Activated CD8-positive, alpha-beta T cell treated with anti-CD3 and anti-CD28 coated beads for 36 hours (primary cell): ENCODE measurements at regions of chr12 and their contacts with region 1.

Region 1: DNA sequence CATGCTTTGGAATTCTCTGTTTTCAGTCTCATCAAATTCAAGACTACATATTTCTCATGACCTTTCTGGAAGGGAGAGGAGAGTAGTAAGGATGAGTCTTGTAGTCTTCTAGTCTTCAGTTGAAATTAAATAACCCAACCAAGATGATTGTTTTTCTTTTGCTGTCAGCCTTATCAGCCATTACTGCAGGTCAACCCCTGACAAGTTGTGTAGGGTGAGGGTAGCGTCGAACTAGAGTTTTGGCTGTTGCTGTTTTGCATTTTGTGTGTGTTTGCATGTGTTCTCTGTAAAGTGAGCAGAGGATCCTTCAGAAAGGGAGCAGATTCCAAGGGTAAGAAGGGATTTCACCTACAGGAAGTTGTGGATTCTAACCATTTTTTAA is 28.4 kb downstream of the DIP2B start:
- DNase-seq: no peak
- ATAC-seq: peak; percentile 21
- H3K4me3 Mint-ChIP-seq: no peak overlapping the region
- H3K27ac Mint-ChIP-seq: no peak overlapping the region
- H3K4me1 Mint-ChIP-seq: peaks cover 38% of the 10 kb centered on the region
- H3K27me3 Mint-ChIP-seq: no peaks in the 10 kb centered on the region
- CTCF ChIP-seq: no peak

Region 2: DNA sequence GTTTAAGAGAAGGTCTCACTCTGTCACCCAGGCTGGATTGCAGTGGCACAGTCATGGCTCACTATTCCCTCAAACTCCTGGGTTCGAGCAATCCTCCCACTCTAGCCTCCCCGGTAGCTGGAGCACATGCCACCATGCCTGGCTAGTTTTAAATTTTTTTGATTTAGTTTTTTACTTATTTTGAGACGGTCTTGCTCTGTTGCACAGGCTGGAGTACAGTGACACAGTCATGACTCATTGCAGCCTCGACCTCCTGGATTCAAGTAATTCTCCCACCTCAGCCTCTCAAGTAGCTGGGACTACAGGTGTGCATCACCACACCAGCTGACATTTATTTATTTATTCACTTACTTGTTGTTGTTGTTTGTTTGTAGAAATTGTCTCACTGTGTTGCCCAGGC is 50.6 kb before region 1 on chr12:
- CTCF ChIA-PET with region 1: no interaction called
- POLR2A ChIA-PET with region 1: no interaction called
- intact Hi-C with region 1: no loop called
- DNase-seq: no peak
- ATAC-seq: no peak
- H3K4me3 Mint-ChIP-seq: no peak overlapping the region
- H3K27ac Mint-ChIP-seq: no peak overlapping the region
- H3K4me1 Mint-ChIP-seq: no peaks in the 10 kb centered on the region
- H3K27me3 Mint-ChIP-seq: no peaks in the 10 kb centered on the region
- CTCF ChIP-seq: no peak

Region 3: GRCh38 chr12:50517456-50518048 is 15.6 kb before region 1 on chr12:
- CTCF ChIA-PET with region 1: interaction called, 4 read pairs
- POLR2A ChIA-PET with region 1: interaction called, 36 read pairs
- intact Hi-C with region 1: no loop called
- DNase-seq: no peak
- ATAC-seq: peak; percentile 90
- H3K4me3 Mint-ChIP-seq: no peak overlapping the region
- H3K27ac Mint-ChIP-seq: no peak overlapping the region
- H3K4me1 Mint-ChIP-seq: peaks cover 48% of the 10 kb centered on the region
- H3K27me3 Mint-ChIP-seq: no peaks in the 10 kb centered on the region
- CTCF ChIP-seq: no peak

Region 4: DNA sequence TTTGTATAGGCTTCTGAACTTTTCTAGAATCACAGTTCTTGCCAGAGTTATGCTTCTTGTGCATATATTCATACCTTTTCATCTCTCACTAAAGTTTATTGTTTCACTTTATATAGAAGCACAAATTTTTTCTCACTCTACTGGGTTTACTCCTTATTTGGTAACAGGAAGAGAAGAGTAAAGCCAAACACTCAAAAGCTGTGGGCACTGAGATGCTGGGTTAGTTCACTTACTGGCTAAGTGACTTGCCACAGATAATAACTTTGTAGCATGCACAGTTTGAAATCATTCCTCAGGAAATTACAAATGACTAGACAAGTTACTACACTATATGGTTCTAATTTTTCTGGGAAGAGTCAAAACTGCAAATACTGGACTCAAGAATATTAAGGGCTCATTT is 426.9 kb after region 1 on chr12:
- CTCF ChIA-PET with region 1: no interaction called
- POLR2A ChIA-PET with region 1: no interaction called
- intact Hi-C with region 1: no loop called
- DNase-seq: no peak
- ATAC-seq: no peak
- H3K4me3 Mint-ChIP-seq: no peak overlapping the region
- H3K27ac Mint-ChIP-seq: no peak overlapping the region
- H3K4me1 Mint-ChIP-seq: peaks cover 6% of the 10 kb centered on the region
- H3K27me3 Mint-ChIP-seq: no peaks in the 10 kb centered on the region
- CTCF ChIP-seq: no peak

Region 5: GRCh38 chr12:51262758-51263177 is 729.6 kb after region 1 on chr12:
- CTCF ChIA-PET with region 1: no interaction called
- POLR2A ChIA-PET with region 1: no interaction called
- intact Hi-C with region 1: no loop called
- DNase-seq: peak; percentile 51
- ATAC-seq: no peak
- H3K4me3 Mint-ChIP-seq: no peak overlapping the region
- H3K27ac Mint-ChIP-seq: no peak overlapping the region
- H3K4me1 Mint-ChIP-seq: peaks cover 18% of the 10 kb centered on the region
- H3K27me3 Mint-ChIP-seq: no peaks in the 10 kb centered on the region
- CTCF ChIP-seq: no peak